Left cardiac atrium (tissue), 4 donors: ENCODE measurements at regions of chr1 and their contacts with region 1.

Region 1: DNA sequence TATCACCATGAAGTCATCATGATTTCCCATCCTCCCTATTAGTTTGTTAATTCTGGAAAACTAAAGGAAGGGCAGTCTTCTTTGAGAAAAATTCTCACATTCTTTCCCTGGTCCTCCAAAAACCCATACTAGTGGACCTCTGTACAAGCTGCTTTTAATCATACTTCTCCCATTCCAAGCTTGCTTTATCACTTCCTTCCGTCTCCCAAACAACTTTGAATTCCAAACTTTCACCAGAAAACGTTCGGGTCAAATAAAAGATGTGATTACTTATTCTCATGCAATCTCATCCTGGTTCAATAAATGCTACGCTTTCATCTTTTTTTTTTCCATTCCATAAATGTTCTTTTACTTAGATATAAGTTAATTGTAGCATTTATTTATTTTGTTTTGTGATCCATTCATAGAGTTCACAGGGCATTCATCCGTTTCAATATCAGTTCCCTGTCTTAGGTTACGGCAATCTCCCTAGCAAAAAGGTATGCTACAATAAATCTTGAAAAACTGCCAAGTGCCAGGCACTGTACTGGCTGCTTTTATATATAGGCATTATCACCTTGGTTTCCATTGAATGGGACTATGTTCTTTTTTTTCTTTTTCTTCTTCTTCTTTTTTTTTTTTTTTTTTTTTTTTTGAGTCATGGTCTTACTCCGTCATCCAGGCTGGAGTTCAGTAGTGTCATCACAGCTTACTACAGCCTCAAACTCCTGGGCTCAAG is 100.2 kb upstream of the GREM2 start:
- DNase-seq: no peak
- ATAC-seq: no peak

Region 2: GRCh38 chr1:240652549-240652948 is 59.6 kb before region 1 on chr1:
- intact Hi-C with region 1: no loop called
- DNase-seq: no peak
- ATAC-seq: no peak

Region 3: DNA sequence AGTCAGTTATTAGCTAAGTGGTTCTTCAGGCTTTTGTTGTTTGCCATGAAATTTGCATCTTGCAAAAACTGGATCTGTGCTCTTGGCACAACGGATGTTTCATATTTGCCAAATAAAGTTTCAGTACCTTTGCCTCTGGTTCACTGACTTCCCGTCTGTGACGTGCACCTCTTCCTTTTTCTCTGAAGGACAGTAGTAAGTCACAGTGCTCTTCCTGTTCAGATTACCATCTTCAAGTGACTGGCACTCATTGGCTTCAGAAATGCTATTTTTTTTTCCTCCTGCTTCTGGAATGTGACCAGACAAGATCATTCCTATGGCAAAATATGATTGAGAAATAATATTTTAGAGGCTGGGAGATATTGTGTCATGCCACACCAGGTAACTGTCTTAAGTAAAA is 24.3 kb before region 1 on chr1:
- intact Hi-C with region 1: loop called in 1 of 2 experiments (anchors 2 kb)
- DNase-seq: no peak
- ATAC-seq: no peak